ENCODE measurements at regions of chr18 and their contacts with region 1.

Region 1: DNA sequence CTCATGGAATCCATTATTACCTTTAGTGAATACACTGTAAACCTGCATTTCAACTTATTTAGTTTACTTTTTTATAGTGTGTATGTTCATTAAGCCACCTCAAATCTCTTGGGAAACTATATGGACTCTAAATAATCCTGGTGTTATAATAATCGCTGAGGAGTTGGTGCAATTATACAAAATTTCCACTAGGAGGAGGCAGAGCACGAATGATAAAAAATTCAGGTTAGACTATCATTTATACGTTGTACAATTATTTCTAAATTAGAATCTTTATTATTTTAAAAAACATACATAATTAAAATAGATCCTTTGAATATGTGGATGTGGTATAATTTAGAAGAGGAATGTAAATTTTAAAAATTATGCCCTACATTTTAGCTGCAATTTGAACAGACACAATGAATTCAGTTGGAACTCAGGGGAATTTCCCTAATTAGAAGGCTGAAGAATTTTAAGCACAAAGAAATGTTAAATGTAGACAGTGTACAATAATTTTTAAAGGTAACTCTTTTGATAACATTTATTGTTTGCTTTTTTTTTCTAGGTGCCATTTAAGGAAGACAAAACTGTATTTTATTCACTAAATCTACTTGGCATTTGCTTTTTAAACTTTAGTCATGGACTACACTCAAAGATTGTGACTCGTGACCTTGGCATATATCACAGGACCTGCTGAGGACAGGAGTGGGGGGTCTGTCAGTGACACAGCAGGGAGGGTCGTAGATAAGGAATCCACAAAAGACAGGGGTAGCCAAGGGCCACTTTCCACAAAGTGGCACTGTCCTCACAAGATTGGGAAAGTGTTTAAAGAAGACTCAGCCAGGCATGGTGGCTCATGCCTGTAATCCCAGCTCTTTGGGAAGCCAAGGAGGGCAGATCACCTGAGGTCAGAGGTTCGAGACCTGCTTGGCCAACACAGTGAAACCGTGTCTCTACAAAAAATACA is 45.5 kb downstream of the RAB12 start:
- DNase-seq: peak; percentile 68
- ATAC-seq: peak; percentile 70
- H3K4me3 ChIP-seq: no peak overlapping the region
- H3K27ac ChIP-seq: no peak overlapping the region
- H3K4me1 ChIP-seq: peaks cover 3% of the 10 kb centered on the region; the same call in 1 of the 2 replicates
- H3K27me3 ChIP-seq: no peaks in the 10 kb centered on the region
- CTCF ChIP-seq: peak; percentile 71

Region 2: DNA sequence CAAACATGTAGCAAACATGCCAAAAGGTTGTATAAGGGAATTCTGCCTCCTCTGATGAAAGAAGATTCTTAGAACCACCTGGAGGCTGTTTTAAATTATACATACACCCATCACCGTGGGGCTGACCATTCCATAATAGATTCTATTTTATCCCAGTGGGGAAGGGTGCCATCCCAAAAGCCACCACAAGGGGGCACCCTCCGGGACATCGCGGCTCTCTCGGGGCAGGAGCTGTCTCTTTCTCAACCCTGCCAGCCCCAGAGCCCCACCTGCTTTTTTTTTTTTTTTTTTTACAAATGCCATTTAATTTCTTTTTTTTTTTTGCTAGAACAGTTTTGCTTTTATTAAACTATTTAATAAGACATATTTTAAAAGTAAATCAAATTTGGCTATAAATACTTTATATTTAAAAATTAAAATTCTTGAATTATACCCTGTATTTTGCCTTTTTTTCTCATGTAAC is 42.0 kb after region 1 on chr18:
- CTCF ChIA-PET with region 1: interaction called, 8 read pairs
- POLR2A ChIA-PET with region 1: no interaction called
- intact Hi-C with region 1: loop called (anchors 1 kb)
- DNase-seq: peak; percentile 81
- ATAC-seq: peak; percentile 86
- H3K4me3 ChIP-seq: no peak overlapping the region
- H3K27ac ChIP-seq: no peak overlapping the region
- H3K4me1 ChIP-seq: peaks cover 10% of the 10 kb centered on the region
- H3K27me3 ChIP-seq: no peaks in the 10 kb centered on the region
- CTCF ChIP-seq: peak; percentile 88

Region 3: GRCh38 chr18:8882632-8883408 is 228.0 kb after region 1 on chr18:
- CTCF ChIA-PET with region 1: no interaction called
- POLR2A ChIA-PET with region 1: no interaction called
- intact Hi-C with region 1: loop called (anchors 1 kb)
- DNase-seq: peak; percentile 93
- ATAC-seq: peak; percentile 89
- H3K4me3 ChIP-seq: no peak overlapping the region
- H3K27ac ChIP-seq: peak overlapping the region; percentile 88
- H3K4me1 ChIP-seq: peaks cover 15% of the 10 kb centered on the region
- H3K27me3 ChIP-seq: no peaks in the 10 kb centered on the region
- CTCF ChIP-seq: peak; percentile 81

Region 4: GRCh38 chr18:8988261-8988871 is 333.6 kb after region 1 on chr18:
- CTCF ChIA-PET with region 1: interaction called, 6 read pairs
- POLR2A ChIA-PET with region 1: no interaction called
- intact Hi-C with region 1: loop called (anchors 1 kb)
- DNase-seq: peak; percentile 81
- ATAC-seq: peak; percentile 95
- H3K4me3 ChIP-seq: no peak overlapping the region
- H3K27ac ChIP-seq: no peak overlapping the region
- H3K4me1 ChIP-seq: no peaks in the 10 kb centered on the region
- H3K27me3 ChIP-seq: no peaks in the 10 kb centered on the region
- CTCF ChIP-seq: peak; percentile 94

Region 5: DNA sequence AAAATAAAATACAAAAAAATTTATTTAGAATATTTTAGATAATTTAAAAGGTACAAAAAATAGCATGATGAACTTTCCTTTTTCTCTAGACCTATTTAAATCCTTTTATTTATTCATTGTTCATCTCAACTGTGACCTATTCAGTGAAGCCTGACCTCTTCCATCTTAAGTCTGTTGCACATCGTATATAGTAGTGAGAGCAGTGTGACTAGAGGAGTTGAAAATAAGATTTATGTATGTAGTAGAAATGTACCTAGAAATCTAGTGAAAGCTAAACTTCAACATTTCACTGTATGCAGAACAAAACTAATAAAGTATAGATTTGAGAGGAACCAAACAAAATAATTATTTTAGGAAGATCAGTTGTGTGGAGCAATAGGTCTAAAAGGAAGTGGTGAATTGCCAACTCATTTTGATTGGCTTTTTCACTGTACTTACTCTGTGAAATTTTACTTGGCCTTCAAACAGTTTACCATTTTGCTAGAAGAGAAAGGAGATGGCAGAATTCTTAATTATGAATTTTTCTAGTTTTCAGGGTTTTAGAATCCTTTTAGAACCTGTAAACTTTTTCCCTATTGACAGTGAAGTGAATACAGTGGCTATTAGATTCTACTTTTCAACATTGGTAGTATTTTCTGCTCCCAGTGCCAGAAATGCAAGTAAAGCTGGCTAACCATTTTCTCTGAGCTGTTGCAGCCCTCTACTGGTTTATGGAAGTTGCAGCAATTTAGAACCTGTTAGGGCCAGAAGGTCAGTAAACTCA is 492.8 kb after region 1 on chr18:
- CTCF ChIA-PET with region 1: no interaction called
- POLR2A ChIA-PET with region 1: no interaction called
- intact Hi-C with region 1: loop called (anchors 10 kb)
- DNase-seq: peak; percentile 78
- ATAC-seq: peak; percentile 90
- H3K4me3 ChIP-seq: no peak overlapping the region
- H3K27ac ChIP-seq: peak overlapping the region; percentile 17
- H3K4me1 ChIP-seq: peaks cover 6% of the 10 kb centered on the region
- H3K27me3 ChIP-seq: no peaks in the 10 kb centered on the region
- CTCF ChIP-seq: peak; percentile 94

Measured in PC-3 (cell line).